Ovary (tissue), 10 donors: ENCODE measurements at regions of chr6 and their contacts with region 1.

Region 1: GRCh38 chr6:150999107-150999506 is 133.6 kb downstream of the MTHFD1L start:
- DNase-seq: no peak
- H3K4me3 ChIP-seq: no peak overlapping the region
- H3K27ac ChIP-seq: peak overlapping the region in 1 of 2 donors; percentile 74
- H3K4me1 ChIP-seq: peaks cover 16% of the 10 kb centered on the region
- H3K27me3 ChIP-seq: no peaks in the 10 kb centered on the region
- CTCF ChIP-seq: no peak
- EP300 ChIP-seq: no peak
- POLR2A ChIP-seq: no peak

Region 2: GRCh38 chr6:150848400-150848799 is 150.7 kb before region 1 on chr6:
- intact Hi-C with region 1: no loop called
- DNase-seq: no peak
- H3K4me3 ChIP-seq: no peak overlapping the region
- H3K27ac ChIP-seq: no peak overlapping the region
- H3K4me1 ChIP-seq: no peaks in the 10 kb centered on the region
- H3K27me3 ChIP-seq: no peaks in the 10 kb centered on the region
- CTCF ChIP-seq: no peak
- EP300 ChIP-seq: no peak
- POLR2A ChIP-seq: no peak

Region 3: GRCh38 chr6:150928882-150929281 is 70.2 kb before region 1 on chr6:
- intact Hi-C with region 1: loop called in 2 of 4 experiments (anchors 10 kb)
- DNase-seq: no peak
- H3K4me3 ChIP-seq: no peak overlapping the region
- H3K27ac ChIP-seq: peak overlapping the region in 1 of 2 donors; percentile 59
- H3K4me1 ChIP-seq: peaks cover 22% of the 10 kb centered on the region
- H3K27me3 ChIP-seq: no peaks in the 10 kb centered on the region
- CTCF ChIP-seq: no peak
- EP300 ChIP-seq: no peak
- POLR2A ChIP-seq: no peak

Region 4: DNA sequence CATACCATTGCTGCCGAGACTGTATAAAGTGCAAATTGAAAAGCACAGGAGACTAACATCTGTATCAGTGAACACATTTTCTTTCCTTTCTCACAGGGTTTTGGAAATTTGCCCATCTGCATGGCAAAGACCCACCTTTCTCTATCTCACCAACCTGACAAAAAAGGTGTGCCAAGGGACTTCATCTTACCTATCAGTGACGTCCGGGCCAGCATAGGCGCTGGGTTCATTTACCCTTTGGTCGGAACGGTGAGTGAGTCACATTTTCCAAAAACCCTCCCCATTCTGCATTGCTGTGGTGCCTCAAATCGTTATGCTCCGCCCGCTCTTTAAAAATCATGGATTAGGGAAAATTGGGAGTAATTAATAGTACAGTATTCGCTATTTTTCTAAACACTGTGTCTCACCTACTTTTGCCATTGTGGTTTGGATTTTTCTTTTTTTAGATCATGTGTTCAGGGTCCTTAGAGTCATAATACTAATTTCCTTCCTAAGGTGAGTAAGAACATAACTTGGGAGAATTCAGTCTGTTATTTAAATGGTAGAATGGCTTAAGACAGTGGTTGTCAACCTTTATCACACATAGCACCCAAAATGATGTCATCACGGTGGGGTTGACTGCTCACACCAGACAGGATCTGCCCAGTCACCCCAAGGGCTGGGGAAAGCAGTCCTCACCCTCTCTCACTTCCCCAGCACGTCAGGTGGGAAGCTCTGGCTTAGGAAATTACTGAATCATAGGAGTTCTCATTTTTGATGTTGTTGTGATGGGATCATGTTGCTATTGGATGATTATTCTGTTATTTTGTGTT is 38.0 kb after region 1 on chr6:
- intact Hi-C with region 1: no loop called
- DNase-seq: peak in 1 of 5 donors; percentile 11
- H3K4me3 ChIP-seq: no peak overlapping the region
- H3K27ac ChIP-seq: no peak overlapping the region
- H3K4me1 ChIP-seq: peaks cover 4% of the 10 kb centered on the region
- H3K27me3 ChIP-seq: no peaks in the 10 kb centered on the region
- CTCF ChIP-seq: no peak
- EP300 ChIP-seq: no peak
- POLR2A ChIP-seq: no peak

Region 5: GRCh38 chr6:151285122-151285521 is 286.0 kb after region 1 on chr6:
- intact Hi-C with region 1: no loop called
- DNase-seq: no peak
- H3K4me3 ChIP-seq: no peak overlapping the region
- H3K27ac ChIP-seq: peak overlapping the region in 1 of 2 donors; percentile 21
- H3K4me1 ChIP-seq: peaks cover 21% of the 10 kb centered on the region
- H3K27me3 ChIP-seq: no peaks in the 10 kb centered on the region
- CTCF ChIP-seq: no peak
- EP300 ChIP-seq: no peak
- POLR2A ChIP-seq: no peak